Activated T-helper 1 cell treated with anti-CD3 and anti-CD28 coated beads, Interleukin-12 subunit alpha, Interleukin-12 subunit beta, Interleukin-2, Interleukin-4 antibody, amounts not matched to agents 30 ng/mL and 10 ng/mL and 1 ng/mL, durations not matched to agents 14 hours and 24 hours and 36 hours (primary cell): ENCODE measurements at regions of chr19 and their contacts with region 1.

Region 1: GRCh38 chr19:1848399-1849131 is at the start of gene REXO1:
- DNase-seq: peak; percentile 95
- H3K4me3 Mint-ChIP-seq: peak within 1 kb of the TSS; percentile 92
- H3K27ac Mint-ChIP-seq: peak within 1 kb of the TSS; percentile 98
- H3K4me1 Mint-ChIP-seq: peaks cover 38% of the 10 kb centered on the region
- H3K27me3 Mint-ChIP-seq: no peaks in the 10 kb centered on the region
- total RNA-seq, gene REXO1: 64.5 and 70.5 TPM in 2 replicates

Region 2: GRCh38 chr19:1592755-1593500 is 255.6 kb before region 1 on chr19 and contains the start of gene MBD3:
- intact Hi-C with region 1: loop called (anchors 2 kb)
- DNase-seq: peak; percentile 87
- H3K4me3 Mint-ChIP-seq: peak within 1 kb of the TSS; percentile 91
- H3K27ac Mint-ChIP-seq: peak within 1 kb of the TSS; percentile 91
- H3K4me1 Mint-ChIP-seq: peaks cover 20% of the 10 kb centered on the region
- H3K27me3 Mint-ChIP-seq: no peaks in the 10 kb centered on the region
- total RNA-seq, gene MBD3: 136 and 139 TPM in 2 replicates

Region 3: DNA sequence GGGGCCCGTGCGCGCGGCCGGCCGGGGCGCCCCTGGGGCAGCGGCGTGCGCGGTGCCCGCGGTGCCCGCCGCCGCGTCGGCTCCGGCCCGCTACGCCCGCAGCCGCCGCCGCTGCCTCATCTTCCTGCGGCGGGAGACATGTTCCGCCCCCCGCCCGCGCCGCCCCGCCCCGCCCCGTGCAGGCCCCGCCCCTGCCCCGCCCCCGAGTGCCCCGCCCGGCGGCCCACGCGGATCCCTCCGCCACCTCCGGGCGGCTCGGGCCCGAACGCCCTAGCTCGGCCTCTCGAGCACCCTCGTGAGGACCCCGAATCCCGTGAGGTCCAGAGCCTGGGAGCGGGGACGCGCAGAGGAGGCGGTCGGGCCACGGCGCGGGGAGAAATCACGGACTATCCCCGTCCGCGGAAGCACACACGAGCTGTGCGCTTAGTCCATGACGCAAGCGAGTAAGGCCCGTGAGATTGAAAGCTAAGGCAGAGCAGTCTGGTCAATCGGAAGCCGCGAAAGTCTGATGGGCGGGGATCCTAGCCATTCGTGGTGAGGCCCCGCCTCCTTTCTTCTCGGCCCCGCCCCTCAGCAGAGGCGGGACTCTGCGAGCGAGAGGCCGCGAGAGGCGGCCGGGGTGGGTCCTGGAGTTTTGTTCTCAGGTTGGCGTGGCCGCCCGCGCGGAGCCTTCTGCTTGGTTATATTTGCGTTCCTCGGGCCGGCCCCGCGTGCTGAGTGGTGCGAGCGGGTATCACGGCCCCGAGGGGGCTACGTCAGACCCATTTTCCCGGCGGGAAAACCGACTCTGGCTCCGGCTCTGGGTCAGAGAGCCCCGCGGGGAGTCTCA is 195.9 kb before region 1 on chr19 and contains the start of gene TCF3:
- intact Hi-C with region 1: loop called (anchors 2 kb)
- DNase-seq: peak; percentile 98
- H3K4me3 Mint-ChIP-seq: peak within 1 kb of the TSS; percentile 95
- H3K27ac Mint-ChIP-seq: peak within 1 kb of the TSS; percentile 97
- H3K4me1 Mint-ChIP-seq: peaks cover 16% of the 10 kb centered on the region
- H3K27me3 Mint-ChIP-seq: peaks cover 1% of the 10 kb centered on the region
- total RNA-seq, gene TCF3: 163 and 172 TPM in 2 replicates

Region 4: DNA sequence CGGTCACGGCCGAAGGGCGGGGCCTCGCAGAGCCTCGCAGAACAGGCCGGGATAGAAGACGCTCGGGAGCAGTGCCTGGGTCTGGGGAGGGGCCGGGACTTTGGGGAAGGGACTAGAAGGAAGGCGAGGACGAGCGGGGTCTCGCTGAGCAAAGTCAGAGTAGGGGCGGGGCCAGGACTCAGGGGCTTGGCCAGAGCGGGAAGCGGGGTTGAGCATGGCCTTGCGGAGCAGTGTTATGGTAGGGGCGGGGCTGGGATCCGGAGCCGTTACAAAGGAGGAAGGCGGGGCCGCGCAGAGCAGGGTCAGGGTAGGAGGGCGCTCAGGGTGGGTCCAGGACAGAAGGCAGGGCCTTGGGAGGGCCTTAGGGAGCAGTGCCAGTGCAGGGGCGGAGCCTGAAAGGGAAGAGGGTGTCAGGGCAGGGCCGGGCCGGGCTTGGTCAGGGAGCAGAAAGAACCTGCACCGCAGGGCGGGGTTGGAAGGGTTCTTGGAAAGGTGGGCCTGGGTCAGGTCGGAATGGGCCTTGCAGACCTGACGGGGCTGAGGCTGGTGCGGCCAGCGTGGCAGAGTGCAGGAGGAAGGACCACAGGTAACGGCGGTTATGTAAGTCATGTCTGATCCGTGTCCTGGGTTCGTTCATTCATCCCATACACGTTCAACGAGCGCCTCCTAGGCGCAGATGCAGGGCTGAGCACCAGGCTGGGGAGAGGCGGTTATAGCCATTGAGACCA is 35.9 kb before region 1 on chr19:
- intact Hi-C with region 1: loop called (anchors 1 kb)
- DNase-seq: peak; percentile 92
- H3K4me3 Mint-ChIP-seq: peak overlapping the region; percentile 93
- H3K27ac Mint-ChIP-seq: peak overlapping the region; percentile 97
- H3K4me1 Mint-ChIP-seq: peaks cover 18% of the 10 kb centered on the region
- H3K27me3 Mint-ChIP-seq: no peaks in the 10 kb centered on the region

Region 5: DNA sequence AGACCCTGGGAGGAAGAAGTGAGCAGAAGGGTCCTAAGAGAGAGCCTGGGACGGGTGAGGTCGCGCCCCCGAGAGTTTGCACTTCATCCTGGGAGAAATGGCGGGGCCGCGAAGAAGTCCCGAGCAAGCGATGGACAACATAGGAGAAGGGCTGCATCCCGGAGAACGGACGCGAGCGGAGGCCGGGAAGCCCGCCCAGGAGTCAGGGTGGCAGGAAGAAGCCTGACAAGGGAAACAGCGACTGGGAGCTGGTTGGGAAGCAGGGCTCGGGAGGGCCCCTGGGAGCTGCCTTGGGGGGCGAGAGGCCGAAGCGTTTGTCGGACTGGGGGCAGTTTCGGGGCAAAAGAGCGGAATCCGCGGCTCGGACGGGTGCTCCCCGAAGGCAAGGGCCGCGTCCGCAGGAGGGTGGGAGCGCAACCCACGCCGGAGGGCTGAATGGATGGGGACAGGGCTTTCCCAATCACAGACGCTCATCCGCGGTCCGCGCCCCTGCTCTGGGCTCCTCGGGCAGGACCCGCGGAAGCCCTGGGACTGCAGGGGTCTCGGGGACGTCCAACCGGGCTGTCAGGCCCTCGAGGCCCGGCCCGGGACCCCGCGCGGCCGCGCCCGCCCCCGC is 36.3 kb after region 1 on chr19:
- intact Hi-C with region 1: loop called (anchors 1 kb)
- DNase-seq: no peak
- H3K4me3 Mint-ChIP-seq: peak overlapping the region; percentile 99
- H3K27ac Mint-ChIP-seq: peak overlapping the region; percentile 99
- H3K4me1 Mint-ChIP-seq: peaks cover 28% of the 10 kb centered on the region
- H3K27me3 Mint-ChIP-seq: no peaks in the 10 kb centered on the region

Region 6: DNA sequence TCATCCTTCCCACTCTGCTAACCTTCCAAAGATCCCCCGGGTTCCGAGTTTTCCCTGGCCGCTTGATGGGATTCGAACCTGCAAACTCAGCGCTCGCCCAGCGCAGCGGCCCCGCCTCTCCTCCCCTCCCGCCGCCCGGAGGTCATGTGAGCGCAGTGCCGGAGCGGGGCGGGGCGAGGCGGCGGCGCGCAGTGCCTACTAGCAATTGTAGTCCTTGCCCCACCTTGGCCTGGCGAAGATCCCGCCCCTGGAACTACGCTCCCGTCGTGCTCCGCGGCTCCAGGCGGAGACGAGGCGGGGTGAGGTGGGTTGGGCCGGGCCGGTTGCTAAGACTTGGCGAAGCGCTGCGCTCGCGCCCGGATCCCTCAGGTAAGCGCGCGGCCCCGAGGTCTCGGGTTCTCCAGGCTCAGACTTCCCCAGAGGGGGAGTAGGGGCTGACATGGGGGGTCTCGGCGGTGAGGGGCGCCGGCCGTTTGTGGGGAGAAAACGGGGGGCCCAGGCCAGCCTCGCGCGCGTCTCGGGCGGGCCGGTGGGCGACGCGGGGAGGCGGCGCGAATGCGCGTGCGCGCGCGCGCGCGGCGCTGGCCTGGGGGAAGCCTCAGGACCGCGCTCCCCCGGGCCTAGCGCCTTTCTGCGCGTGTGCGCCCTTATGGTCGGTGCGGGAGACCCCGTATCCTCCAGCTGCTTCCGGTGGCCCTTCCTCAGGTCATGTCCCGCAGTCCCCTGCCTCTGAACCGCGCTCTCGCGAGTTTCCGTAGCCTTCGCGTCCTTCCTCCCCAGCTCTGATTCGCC is 56.7 kb after region 1 on chr19 and contains the starts of genes ADAT3 and SCAMP4:
- intact Hi-C with region 1: loop called (anchors 1 kb)
- DNase-seq: peak; percentile 99
- H3K4me3 Mint-ChIP-seq: peak within 1 kb of the TSS; percentile 90
- H3K27ac Mint-ChIP-seq: peak within 1 kb of the TSS; percentile 83
- H3K4me1 Mint-ChIP-seq: peaks cover 27% of the 10 kb centered on the region
- H3K27me3 Mint-ChIP-seq: no peaks in the 10 kb centered on the region
- total RNA-seq, gene ADAT3: 8.4 and 9.6 TPM in 2 replicates
- total RNA-seq, gene SCAMP4: 38.0 and 41.5 TPM in 2 replicates